ENCODE measurements at regions of chr14 and their contacts with region 1.

Region 1: DNA sequence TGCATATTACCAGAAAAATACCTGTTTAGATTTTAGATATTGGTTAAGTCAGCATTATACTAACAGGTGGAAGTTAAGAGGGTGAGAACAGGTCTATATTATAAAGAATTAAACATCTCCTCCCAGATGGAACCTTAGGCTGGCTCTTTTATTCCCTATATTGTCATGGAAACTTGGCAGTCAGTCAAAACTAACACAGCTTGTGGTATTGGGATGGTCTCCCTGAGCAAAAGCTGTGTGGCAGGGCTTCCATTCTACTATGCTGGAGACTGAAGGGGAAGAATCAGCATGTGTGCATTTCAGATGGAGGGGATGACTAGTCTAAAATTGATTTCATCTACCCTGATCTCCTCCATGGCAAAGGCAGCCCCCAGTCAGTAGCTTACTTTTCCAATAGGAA is 66.7 kb downstream of the SMOC1 start:
- DNase-seq: no peak
- CTCF ChIP-seq: no peak

Region 2: DNA sequence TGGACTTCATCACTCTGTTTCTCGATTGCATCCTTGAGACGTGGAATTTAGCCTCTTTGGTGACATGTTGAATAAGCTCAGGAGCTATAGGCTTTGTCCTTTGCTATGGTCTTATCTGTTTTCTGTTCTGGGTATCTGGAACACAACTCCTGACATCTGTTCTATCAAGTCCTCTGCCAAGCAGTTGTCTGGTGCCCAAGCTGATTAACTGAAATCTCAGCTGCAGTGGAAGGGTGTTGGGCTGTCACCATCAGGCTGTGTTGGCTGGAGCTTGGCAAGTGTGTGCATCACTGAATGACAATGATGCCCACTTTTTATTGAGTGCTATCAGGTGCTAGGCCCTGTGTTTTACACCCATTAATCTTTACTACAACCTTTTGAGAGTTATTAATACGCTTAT is 11.1 kb after region 1 on chr14:
- CTCF ChIA-PET with region 1: interaction called, 10 read pairs
- POLR2A ChIA-PET with region 1: no interaction called
- DNase-seq: no peak
- CTCF ChIP-seq: no peak

Measured in GM10248 (cell line).